CD4-positive, alpha-beta T cell (primary cell): ENCODE measurements at regions of chr6 and their contacts with region 1.

Region 1: GRCh38 chr6:28252009-28252975 is at the start of gene ZKSCAN4:
- DNase-seq: peak; percentile 65 to 91 (median 80)
- ATAC-seq: peak; percentile 91
- H3K4me3 ChIP-seq: peak within 1 kb of the TSS; percentile 84
- H3K4me3 Mint-ChIP-seq: peak within 1 kb of the TSS; percentile 99
- H3K27ac ChIP-seq: peak within 1 kb of the TSS in 1 of 2 donors; percentile 61
- H3K27ac Mint-ChIP-seq: peak within 1 kb of the TSS; percentile 93
- H3K4me1 ChIP-seq: peaks cover 24% of the 10 kb centered on the region
- H3K4me1 Mint-ChIP-seq: peaks cover 43% of the 10 kb centered on the region
- H3K27me3 ChIP-seq: no peaks in the 10 kb centered on the region
- H3K27me3 Mint-ChIP-seq: peaks cover 4% of the 10 kb centered on the region
- CTCF ChIP-seq: no peak
- total RNA-seq, gene ZKSCAN4: 0.84 to 1.6 TPM

Region 2: GRCh38 chr6:27049863-27050781 is 1202.2 kb before region 1 on chr6:
- CTCF ChIA-PET with region 1: no interaction called
- POLR2A ChIA-PET with region 1: no interaction called
- intact Hi-C with region 1: no loop called
- DNase-seq: no peak
- ATAC-seq: no peak
- H3K4me3 ChIP-seq: no peak overlapping the region
- H3K4me3 Mint-ChIP-seq: no peak overlapping the region
- H3K27ac ChIP-seq: no peak overlapping the region
- H3K27ac Mint-ChIP-seq: no peak overlapping the region
- H3K4me1 ChIP-seq: no peaks in the 10 kb centered on the region
- H3K4me1 Mint-ChIP-seq: no peaks in the 10 kb centered on the region
- H3K27me3 ChIP-seq: peaks cover 3 to 4% of the 10 kb centered on the region in 2 experiments
- H3K27me3 Mint-ChIP-seq: peaks cover 22% of the 10 kb centered on the region
- CTCF ChIP-seq: no peak

Region 3: DNA sequence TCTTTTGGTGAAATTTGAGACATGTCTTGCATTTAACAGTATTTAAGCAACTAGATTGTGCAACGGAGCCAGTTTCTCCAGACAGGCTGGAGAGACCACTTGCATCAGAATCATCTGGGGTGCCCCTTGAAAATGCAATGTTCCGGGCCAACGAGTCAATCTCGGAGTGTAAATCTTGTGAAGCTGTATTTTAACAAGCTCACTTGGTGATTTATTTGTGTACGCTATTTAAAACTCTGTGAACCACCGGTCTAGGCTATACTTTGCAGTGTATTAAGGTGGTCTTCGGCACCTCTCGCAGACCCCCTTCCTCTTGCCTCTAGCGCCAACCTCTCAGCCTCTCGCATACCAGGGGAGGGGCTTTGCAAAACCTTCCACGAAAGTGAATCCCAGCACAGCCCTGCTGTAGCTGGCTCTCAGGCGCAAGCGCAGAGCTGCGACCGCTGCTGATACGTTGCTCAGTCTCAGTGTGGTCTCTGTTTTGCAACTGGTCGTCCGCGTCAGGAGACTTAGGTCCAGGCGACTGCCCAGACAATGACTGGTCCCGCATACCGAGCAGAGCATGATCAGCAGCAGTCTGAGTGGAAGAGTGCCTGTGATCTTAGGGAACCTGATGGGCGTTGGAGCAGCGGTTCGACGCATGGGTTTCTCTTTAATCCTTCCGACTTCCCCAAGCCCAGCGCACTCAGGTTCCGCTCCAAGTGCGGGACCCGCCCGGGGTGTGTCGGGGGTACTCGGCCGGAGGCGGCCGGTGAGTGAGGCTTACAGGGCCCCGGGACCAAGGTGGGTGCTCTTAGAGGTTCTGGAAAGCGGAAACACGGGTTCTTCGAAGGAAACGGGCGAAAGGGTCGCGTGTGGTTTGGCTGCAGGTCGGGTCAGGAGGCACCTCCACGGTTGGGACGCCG is 863.7 kb before region 1 on chr6 and contains the start of gene ZNF391:
- CTCF ChIA-PET with region 1: no interaction called
- POLR2A ChIA-PET with region 1: no interaction called
- intact Hi-C with region 1: loop called in 1 of 2 experiments (anchors 5 kb)
- DNase-seq: peak; percentile 41 to 80 (median 58)
- ATAC-seq: peak; percentile 87
- H3K4me3 ChIP-seq: peak within 1 kb of the TSS; percentile 78
- H3K4me3 Mint-ChIP-seq: peak within 1 kb of the TSS; percentile 98
- H3K27ac ChIP-seq: no peak within 1 kb of the TSS
- H3K27ac Mint-ChIP-seq: peak within 1 kb of the TSS; percentile 90
- H3K4me1 ChIP-seq: peaks cover 13% of the 10 kb centered on the region
- H3K4me1 Mint-ChIP-seq: peaks cover 24% of the 10 kb centered on the region
- H3K27me3 ChIP-seq: no peaks in the 10 kb centered on the region
- H3K27me3 Mint-ChIP-seq: peaks cover 2% of the 10 kb centered on the region
- CTCF ChIP-seq: no peak
- total RNA-seq, gene ZNF391: 1.6 to 1.8 TPM

Region 4: GRCh38 chr6:28145231-28145630 is 107.1 kb before region 1 on chr6:
- CTCF ChIA-PET with region 1: interaction called, 5 read pairs
- POLR2A ChIA-PET with region 1: interaction called, 26 read pairs
- intact Hi-C with region 1: loop called (anchors 1 to 2 kb)
- DNase-seq: no peak
- ATAC-seq: no peak
- H3K4me3 ChIP-seq: no peak overlapping the region
- H3K4me3 Mint-ChIP-seq: peak overlapping the region; percentile 3
- H3K27ac ChIP-seq: no peak overlapping the region
- H3K27ac Mint-ChIP-seq: no peak overlapping the region
- H3K4me1 ChIP-seq: peaks cover 14% of the 10 kb centered on the region
- H3K4me1 Mint-ChIP-seq: peaks cover 67% of the 10 kb centered on the region
- H3K27me3 ChIP-seq: no peaks in the 10 kb centered on the region
- H3K27me3 Mint-ChIP-seq: no peaks in the 10 kb centered on the region
- CTCF ChIP-seq: no peak

Region 5: GRCh38 chr6:28349892-28350737 is 97.8 kb after region 1 on chr6 and contains the start of gene ZKSCAN3:
- CTCF ChIA-PET with region 1: interaction called, 3 read pairs
- POLR2A ChIA-PET with region 1: interaction called, 8 read pairs
- intact Hi-C with region 1: loop called in 1 of 2 experiments (anchors 5 kb)
- DNase-seq: peak; percentile 65 to 89 (median 80)
- ATAC-seq: peak; percentile 100
- H3K4me3 ChIP-seq: peak within 1 kb of the TSS; percentile 73
- H3K4me3 Mint-ChIP-seq: peak within 1 kb of the TSS; percentile 99
- H3K27ac ChIP-seq: peak within 1 kb of the TSS in 1 of 2 donors; percentile 46
- H3K27ac Mint-ChIP-seq: peak within 1 kb of the TSS; percentile 85
- H3K4me1 ChIP-seq: peaks cover 13% of the 10 kb centered on the region
- H3K4me1 Mint-ChIP-seq: peaks cover 43% of the 10 kb centered on the region
- H3K27me3 ChIP-seq: peaks cover 0 to 11% of the 10 kb centered on the region in 2 experiments
- H3K27me3 Mint-ChIP-seq: peaks cover 27% of the 10 kb centered on the region
- CTCF ChIP-seq: no peak
- total RNA-seq, gene ZKSCAN3: 0.88 to 0.89 TPM

Region 6: DNA sequence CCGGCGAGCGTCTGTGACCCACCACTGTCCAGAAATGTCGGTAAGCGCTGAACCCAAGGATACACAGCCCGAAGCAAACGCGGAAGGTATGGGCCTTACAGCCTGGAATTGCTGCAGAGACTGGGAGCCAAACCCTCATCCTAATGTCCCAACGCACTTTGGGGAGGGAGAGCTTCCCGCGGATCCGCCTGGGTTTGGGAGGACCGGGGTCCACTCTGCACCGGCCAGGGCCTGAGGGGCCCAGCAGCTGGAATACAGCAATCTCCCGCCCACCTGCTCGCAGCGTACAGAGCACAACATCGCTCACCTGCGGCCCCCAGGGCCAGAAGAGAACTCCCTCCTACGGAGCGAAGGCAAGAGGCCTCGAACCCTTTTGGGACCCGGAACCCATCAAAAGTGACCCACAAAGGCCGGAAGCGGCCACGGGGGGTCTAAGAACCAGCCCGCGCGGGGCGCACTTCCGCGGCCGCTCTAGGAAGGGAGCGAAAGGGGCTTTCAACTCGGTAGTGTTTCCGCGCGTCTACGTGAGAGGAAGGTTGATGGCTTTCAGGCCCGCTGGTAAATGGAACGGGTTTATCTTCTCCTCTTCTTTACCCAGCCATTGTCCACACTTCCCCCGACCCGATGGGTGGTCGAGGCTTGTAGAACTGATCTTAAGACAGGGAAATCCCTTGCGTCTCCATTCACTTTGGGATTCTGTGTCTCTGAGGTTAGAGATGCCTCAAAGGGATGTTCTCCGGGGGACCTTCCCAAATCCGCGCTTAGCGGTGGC is 147.2 kb after region 1 on chr6 and contains the start of gene ZSCAN12:
- CTCF ChIA-PET with region 1: no interaction called
- POLR2A ChIA-PET with region 1: interaction called, 4 read pairs
- intact Hi-C with region 1: loop called (anchors 1 to 5 kb)
- DNase-seq: peak; percentile 70 to 90 (median 82)
- ATAC-seq: peak; percentile 92
- H3K4me3 ChIP-seq: peak within 1 kb of the TSS; percentile 69
- H3K4me3 Mint-ChIP-seq: peak within 1 kb of the TSS; percentile 97
- H3K27ac ChIP-seq: peak within 1 kb of the TSS; percentile 23 to 49
- H3K27ac Mint-ChIP-seq: peak within 1 kb of the TSS; percentile 86
- H3K4me1 ChIP-seq: peaks cover 20% of the 10 kb centered on the region
- H3K4me1 Mint-ChIP-seq: peaks cover 55% of the 10 kb centered on the region
- H3K27me3 ChIP-seq: no peaks in the 10 kb centered on the region
- H3K27me3 Mint-ChIP-seq: peaks cover 32% of the 10 kb centered on the region
- CTCF ChIP-seq: peak; percentile 70
- total RNA-seq, gene ZSCAN12: 2.0 to 2.3 TPM